ENCODE measurements at regions of chr18 and their contacts with region 1.

Region 1: GRCh38 chr18:9366192-9366591 is 31.6 kb downstream of the TWSG1 start:
- DNase-seq: peak; percentile 88
- H3K4me3 ChIP-seq: no peak overlapping the region
- H3K27ac ChIP-seq: peak overlapping the region; percentile 57 to 68
- H3K4me1 ChIP-seq: peaks cover 5% of the 10 kb centered on the region
- H3K27me3 ChIP-seq: no peaks in the 10 kb centered on the region
- CTCF ChIP-seq: peak in 3 of 4 experiments; percentile 38 to 62 (median 41)
- POLR2A ChIP-seq: no peak

Region 2: DNA sequence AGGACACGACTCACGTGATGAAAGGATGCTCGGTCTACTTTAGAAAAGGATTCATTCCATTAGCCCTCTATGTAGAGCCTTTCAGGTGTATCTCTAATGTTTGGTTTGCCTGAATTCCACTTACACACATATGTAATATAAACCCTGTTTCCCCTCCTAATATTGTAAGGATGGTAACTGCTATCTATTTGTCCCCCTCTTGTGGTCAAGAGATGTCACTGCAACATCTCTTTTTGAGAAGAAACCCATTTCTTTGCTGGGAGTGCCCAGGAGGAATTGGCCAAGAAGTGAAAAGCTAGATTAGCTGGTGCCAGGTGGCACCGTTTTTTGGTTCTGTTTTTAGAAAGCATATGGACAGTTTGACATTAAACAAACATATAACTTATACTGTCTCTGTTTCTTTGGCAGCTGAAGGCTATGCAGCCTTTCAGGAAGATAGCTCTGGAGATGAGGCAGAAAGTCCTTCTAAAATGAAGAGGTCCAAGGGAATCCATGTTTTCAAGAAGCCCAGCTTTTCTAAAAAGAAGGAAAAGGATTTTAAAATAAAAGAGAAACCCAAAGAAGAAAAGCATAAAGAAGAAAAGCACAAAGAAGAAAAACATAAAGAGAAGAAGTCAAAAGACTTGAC is 150.4 kb after region 1 on chr18:
- intact Hi-C with region 1: loop called (anchors 10 kb)
- DNase-seq: no peak
- H3K4me3 ChIP-seq: no peak overlapping the region
- H3K27ac ChIP-seq: no peak overlapping the region
- H3K4me1 ChIP-seq: no peaks in the 10 kb centered on the region
- H3K27me3 ChIP-seq: no peaks in the 10 kb centered on the region
- CTCF ChIP-seq: peak; percentile 70 to 78 (median 76)
- POLR2A ChIP-seq: no peak